ENCODE measurements at regions of chr18 and their contacts with region 1.

Region 1: DNA sequence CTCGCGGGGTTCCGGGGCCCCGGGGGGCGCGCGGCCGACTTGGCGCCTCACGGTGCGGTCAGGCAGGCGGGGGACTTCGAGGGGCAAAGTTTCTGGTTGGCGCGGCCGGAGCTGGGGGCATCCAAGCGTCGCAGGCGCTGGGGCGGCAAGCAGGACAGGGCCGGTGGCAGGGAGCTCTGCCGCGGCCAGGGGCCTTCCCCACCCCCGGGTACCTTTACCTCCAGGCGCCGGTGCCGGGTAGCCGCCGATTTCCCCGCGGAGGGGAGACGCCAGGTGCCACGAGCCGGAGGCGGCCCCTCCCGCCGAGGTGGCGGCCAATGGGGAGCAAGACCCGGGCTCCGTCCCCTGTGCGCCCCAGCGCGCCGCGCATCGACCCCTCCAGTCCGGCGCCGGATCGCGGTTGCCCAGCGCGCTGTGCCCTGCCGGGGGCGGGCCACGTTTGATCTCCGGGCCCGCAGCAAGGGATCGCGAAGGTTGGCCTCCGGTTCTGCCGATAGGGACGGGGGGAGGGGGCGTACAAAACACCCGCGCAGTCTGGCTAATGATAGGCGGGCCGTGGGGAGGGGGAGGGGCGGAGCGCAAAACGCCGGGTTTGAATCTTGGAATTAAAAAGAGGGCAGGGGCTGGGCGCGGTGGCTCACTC is at the start of gene ST8SIA5:
- DNase-seq: peak in 1 of 2 donors; percentile 24
- ATAC-seq: peak; percentile 34 to 47
- H3K4me3 ChIP-seq: peak within 1 kb of the TSS; percentile 59 to 81 (median 68)
- H3K27ac ChIP-seq: peak within 1 kb of the TSS; percentile 50 to 88 (median 76)
- H3K4me1 ChIP-seq: peaks cover 12 to 22% of the 10 kb centered on the region in 2 donors
- H3K27me3 ChIP-seq: no peaks in the 10 kb centered on the region
- CTCF ChIP-seq: no peak
- POLR2A ChIP-seq: peak in 1 of 2 donors; percentile 5
- total RNA-seq, gene ST8SIA5: 1.7 to 7.7 (median 3.6) TPM

Region 2: DNA sequence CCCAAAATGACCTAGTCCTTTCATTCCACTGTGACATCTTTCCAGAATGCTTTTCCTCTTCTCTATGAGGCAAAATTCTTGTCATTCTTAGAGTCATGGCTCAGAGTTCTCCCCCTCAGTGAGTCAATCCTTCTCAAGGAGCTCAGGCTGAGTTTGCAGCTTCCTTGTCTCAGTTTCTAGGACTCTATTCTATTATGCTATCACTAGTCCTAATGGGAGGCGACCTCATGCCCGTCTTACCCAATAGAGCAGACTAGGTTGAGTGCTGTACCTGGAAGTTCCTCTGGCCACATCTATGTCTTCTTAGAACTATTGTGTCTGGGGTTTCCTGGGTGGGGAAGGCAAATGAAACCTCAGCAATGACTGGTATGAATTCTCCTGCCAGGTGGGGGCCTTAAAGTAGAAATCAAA is 601.0 kb before region 1 on chr18:
- in situ Hi-C with region 1: no loop called
- intact Hi-C with region 1: loop called (anchors 10 kb)
- DNase-seq: no peak
- ATAC-seq: no peak
- H3K4me3 ChIP-seq: no peak overlapping the region
- H3K27ac ChIP-seq: peak overlapping the region in 1 of 4 donors; percentile 97
- H3K4me1 ChIP-seq: peaks cover 26 to 27% of the 10 kb centered on the region in 2 donors
- H3K27me3 ChIP-seq: no peaks in the 10 kb centered on the region
- CTCF ChIP-seq: no peak
- POLR2A ChIP-seq: no peak

Region 3: DNA sequence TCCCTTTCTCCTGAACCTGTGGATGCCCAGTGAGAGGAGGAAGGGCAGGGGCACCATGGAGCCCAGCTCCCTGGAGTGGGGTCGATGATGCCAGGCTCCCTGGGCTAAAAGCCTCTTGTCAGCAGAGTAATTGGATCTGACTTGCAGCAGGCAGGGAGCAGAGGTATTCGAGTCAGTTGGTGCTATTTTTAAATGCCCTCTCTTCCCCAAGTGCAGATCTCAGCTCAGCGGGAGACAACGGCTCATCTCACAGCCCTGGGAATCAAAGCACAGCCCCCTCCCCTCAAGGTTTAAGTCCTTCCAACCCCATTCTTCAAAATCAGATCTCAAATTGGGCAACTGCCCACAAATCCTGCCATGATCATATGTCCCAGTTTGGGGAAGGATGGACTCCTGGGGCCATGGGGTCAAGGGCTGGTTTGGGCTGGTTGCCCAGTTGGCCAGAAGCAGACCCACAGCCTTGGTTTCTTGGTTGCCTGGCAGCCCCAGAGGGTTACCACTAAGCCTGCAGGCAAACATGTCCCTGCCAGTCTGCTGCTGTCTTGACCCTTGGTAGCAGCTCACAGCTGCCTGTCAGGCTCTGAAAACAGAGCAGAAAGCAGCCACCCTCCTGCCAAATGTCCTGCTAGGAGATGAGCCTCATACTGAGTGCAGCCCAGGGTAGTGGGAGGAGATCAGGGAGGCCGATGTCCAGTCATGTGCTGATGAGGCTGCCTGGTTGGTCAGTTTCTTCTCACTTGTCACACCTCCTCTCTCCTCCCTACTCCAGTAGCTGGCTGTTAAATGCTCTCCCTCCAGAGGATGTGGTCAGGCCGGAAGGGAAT is 344.6 kb before region 1 on chr18:
- in situ Hi-C with region 1: no loop called
- intact Hi-C with region 1: loop called (anchors 2 kb)
- DNase-seq: peak; percentile 74 to 94
- ATAC-seq: peak; percentile 82 to 84
- H3K4me3 ChIP-seq: peak overlapping the region in 1 of 4 donors; percentile 23
- H3K27ac ChIP-seq: peak overlapping the region; percentile 91 to 98 (median 96)
- H3K4me1 ChIP-seq: peaks cover 76 to 78% of the 10 kb centered on the region in 2 donors
- H3K27me3 ChIP-seq: no peaks in the 10 kb centered on the region
- CTCF ChIP-seq: no peak
- POLR2A ChIP-seq: peak in 1 of 2 donors; percentile 72

Region 4: DNA sequence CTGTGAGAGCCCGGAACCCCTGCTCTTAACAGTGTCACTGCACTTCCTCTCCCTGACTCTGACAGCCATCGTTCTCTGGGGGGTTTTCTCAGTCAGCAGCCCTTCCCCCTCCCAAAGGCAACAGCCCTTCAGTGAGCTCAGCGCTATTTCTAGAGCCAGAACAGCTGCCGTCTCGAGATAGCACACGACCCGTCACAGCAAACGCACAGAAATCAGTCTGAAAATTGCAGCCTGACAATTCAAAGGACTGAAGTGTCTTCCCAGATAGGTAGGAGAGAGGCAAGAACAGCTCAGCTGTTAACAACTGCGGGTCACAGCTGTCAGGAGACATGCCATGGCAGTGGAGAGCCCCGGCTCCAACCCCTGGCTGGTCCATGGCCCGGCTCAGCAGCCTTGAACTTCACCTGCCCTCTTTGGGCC is 45.2 kb before region 1 on chr18:
- in situ Hi-C with region 1: no loop called
- intact Hi-C with region 1: loop called (anchors 5 kb)
- DNase-seq: peak; percentile 19 to 77
- ATAC-seq: peak; percentile 80 to 82
- H3K4me3 ChIP-seq: no peak overlapping the region
- H3K27ac ChIP-seq: peak overlapping the region; percentile 85 to 90 (median 88)
- H3K4me1 ChIP-seq: peaks cover 34 to 49% of the 10 kb centered on the region in 2 donors
- H3K27me3 ChIP-seq: no peaks in the 10 kb centered on the region
- CTCF ChIP-seq: no peak
- POLR2A ChIP-seq: peak in 1 of 2 donors; percentile 35

Region 5: GRCh38 chr18:46815661-46816060 is 59.0 kb after region 1 on chr18:
- in situ Hi-C with region 1: no loop called
- intact Hi-C with region 1: loop called (anchors 5 kb)
- DNase-seq: no peak
- ATAC-seq: no peak
- H3K4me3 ChIP-seq: no peak overlapping the region
- H3K27ac ChIP-seq: no peak overlapping the region
- H3K4me1 ChIP-seq: peaks cover 6 to 17% of the 10 kb centered on the region in 2 donors
- H3K27me3 ChIP-seq: no peaks in the 10 kb centered on the region
- CTCF ChIP-seq: no peak
- POLR2A ChIP-seq: no peak

Region 6: GRCh38 chr18:46859855-46860254 is 103.2 kb after region 1 on chr18:
- in situ Hi-C with region 1: no loop called
- intact Hi-C with region 1: no loop called
- DNase-seq: no peak
- ATAC-seq: no peak
- H3K4me3 ChIP-seq: no peak overlapping the region
- H3K27ac ChIP-seq: no peak overlapping the region
- H3K4me1 ChIP-seq: peaks cover 16 to 18% of the 10 kb centered on the region in 2 donors
- H3K27me3 ChIP-seq: no peaks in the 10 kb centered on the region
- CTCF ChIP-seq: no peak
- POLR2A ChIP-seq: no peak

Region 7: GRCh38 chr18:46917108-46917802 is 160.6 kb after region 1 on chr18 and contains the starts of genes KATNAL2 and PIAS2:
- in situ Hi-C with region 1: no loop called
- intact Hi-C with region 1: loop called (anchors 5 kb)
- DNase-seq: peak; percentile 64 to 80
- ATAC-seq: peak; percentile 83 to 90
- H3K4me3 ChIP-seq: peak within 1 kb of the TSS; percentile 74 to 92 (median 80)
- H3K27ac ChIP-seq: peak within 1 kb of the TSS; percentile 92 to 99 (median 96)
- H3K4me1 ChIP-seq: peaks cover 32 to 36% of the 10 kb centered on the region in 2 donors
- H3K27me3 ChIP-seq: no peaks in the 10 kb centered on the region
- CTCF ChIP-seq: peak in 2 of 5 experiments; percentile 9 to 22
- POLR2A ChIP-seq: peak; percentile 94 to 98
- total RNA-seq, gene KATNAL2: 0.27 to 2.7 (median 0.52) TPM in 3 of 4 donors, not detected in the other
- total RNA-seq, gene PIAS2: 14.9 to 41.2 (median 25.1) TPM

Region 8: DNA sequence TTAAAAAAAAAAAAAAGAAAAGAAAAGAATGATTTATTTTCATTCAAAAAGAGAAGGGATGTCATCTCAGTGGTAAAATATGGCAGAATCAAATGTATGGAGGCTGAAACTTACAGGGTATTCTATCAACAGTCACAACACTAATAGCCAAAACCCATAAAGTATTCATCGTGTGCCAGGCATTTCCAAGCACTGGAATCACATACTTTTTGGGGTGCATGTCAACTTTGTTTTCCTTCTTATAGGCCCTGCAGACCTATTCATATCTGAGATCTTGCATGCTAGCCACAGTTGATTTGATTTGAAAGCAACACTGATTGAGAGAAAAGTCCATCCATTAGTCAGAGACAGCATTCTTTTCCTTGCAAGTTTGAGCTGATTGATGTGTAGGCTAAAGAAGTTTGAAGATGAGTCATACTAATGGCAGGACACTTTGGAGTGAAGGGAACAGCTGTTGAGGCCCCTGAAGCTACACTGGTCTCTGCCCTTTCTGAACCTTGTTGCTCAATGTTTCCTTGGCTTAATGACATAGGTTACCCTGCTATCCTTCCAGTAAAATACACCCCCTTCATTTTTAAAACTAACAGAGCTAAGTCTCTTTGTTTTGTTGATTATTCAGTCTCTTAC is 182.8 kb after region 1 on chr18:
- in situ Hi-C with region 1: no loop called
- intact Hi-C with region 1: loop called (anchors 5 kb)
- DNase-seq: peak; percentile 31 to 70
- ATAC-seq: peak; percentile 99 to 100
- H3K4me3 ChIP-seq: no peak overlapping the region
- H3K27ac ChIP-seq: peak overlapping the region; percentile 60 to 83 (median 80)
- H3K4me1 ChIP-seq: peaks cover 24 to 28% of the 10 kb centered on the region in 2 donors
- H3K27me3 ChIP-seq: no peaks in the 10 kb centered on the region
- CTCF ChIP-seq: no peak
- POLR2A ChIP-seq: no peak